ENCODE measurements at regions of chr20 and their contacts with region 1.

Region 1: GRCh38 chr20:47725248-47725973 is 59.9 kb downstream of the SULF2 start:
- DNase-seq: peak; percentile 85 to 88
- ATAC-seq: peak; percentile 81 to 92
- H3K4me3 ChIP-seq: no peak overlapping the region
- H3K27ac ChIP-seq: no peak overlapping the region
- H3K4me1 ChIP-seq: no peaks in the 10 kb centered on the region
- CTCF ChIP-seq: peak; percentile 81
- EP300 ChIP-seq: no peak
- POLR2A ChIP-seq: no peak
- RAD21 ChIP-seq: peak; percentile 81 to 90

Region 2: DNA sequence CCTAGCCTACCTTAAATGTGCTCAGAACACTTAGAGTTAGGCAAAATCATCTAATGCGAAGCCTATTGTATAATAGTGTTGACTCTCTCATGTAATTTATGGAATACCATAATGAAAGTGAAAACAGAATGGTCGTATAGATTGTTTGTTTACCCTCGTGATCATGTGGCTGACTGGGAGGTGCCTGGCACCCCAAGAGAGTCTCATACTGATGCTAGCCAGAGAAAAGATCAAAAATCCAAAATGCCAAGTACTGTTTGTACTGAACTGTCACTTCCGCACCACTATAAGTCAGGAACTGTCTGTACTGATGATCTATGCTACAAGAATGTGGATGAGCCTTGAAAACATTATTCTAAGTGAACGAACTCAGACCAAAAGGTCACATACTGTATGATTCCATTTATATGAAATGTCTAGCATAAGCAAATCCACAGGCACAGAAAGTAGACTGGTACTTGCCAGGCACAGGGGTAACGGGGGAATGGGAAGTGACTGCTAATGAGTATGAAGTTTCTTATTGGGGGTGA is 391.3 kb before region 1 on chr20:
- CTCF ChIA-PET with region 1: no interaction called
- POLR2A ChIA-PET with region 1: no interaction called
- DNase-seq: peak; percentile 77 to 91
- ATAC-seq: peak; percentile 90 to 94
- H3K4me3 ChIP-seq: peak overlapping the region; percentile 34
- H3K27ac ChIP-seq: peak overlapping the region; percentile 94 to 97
- H3K4me1 ChIP-seq: peaks cover 70% of the 10 kb centered on the region
- CTCF ChIP-seq: no peak
- EP300 ChIP-seq: peak; percentile 79 to 93; a peak in 3 of 5 replicates
- POLR2A ChIP-seq: no peak
- RAD21 ChIP-seq: peak; percentile 20 to 54; a peak in 4 of 5 replicates

Region 3: DNA sequence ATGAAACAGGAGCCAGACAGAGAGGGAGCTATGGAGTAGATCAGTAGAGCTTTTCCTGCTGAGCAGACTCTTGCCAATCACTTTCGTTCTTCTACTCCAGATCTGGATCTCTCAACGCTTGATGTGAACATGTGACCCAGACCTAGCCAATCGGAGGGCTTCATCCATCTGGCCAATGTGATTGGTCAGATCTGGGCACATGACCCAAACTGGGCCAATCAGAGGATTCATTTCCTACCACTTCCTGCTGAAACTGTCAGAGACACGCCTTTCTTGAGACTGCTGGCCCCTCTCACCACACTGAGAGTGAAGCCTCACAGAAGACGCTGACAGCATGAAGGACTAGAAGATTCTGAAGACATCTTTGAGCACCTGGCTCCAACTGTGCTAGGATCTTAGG is 324.7 kb before region 1 on chr20:
- CTCF ChIA-PET with region 1: no interaction called
- POLR2A ChIA-PET with region 1: no interaction called
- DNase-seq: peak in 1 of 2 experiments; percentile 81
- ATAC-seq: peak in 1 of 2 experiments; percentile 69; a peak in 3 of 6 replicates
- H3K4me3 ChIP-seq: no peak overlapping the region
- H3K27ac ChIP-seq: peak overlapping the region in 1 of 2 experiments; percentile 34; a peak in 1 of 6 replicates
- H3K4me1 ChIP-seq: peaks cover 8% of the 10 kb centered on the region; the same call in 2 of the 3 replicates
- CTCF ChIP-seq: no peak
- EP300 ChIP-seq: no peak
- POLR2A ChIP-seq: no peak
- RAD21 ChIP-seq: no peak

Region 4: DNA sequence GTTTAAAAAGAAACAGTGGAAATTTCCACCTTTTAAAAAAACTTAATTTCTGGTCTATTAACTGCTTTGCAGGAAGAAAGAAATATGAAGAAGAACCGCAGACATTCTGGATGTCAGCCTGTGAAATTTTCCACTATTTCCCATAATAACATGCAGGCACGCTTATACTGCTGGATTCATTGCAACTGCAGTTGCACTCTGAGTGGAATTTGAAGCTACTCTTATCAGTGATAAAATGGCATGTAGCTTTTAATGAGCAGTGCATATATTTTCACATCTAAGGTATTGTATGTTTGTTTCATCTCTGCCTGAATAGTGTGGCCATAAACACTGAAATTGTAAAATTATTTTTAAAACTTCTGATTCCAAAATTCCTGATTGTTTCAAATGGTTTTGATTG is 195.6 kb before region 1 on chr20:
- CTCF ChIA-PET with region 1: no interaction called
- POLR2A ChIA-PET with region 1: no interaction called
- DNase-seq: no peak
- ATAC-seq: no peak
- H3K4me3 ChIP-seq: no peak overlapping the region
- H3K27ac ChIP-seq: no peak overlapping the region
- H3K4me1 ChIP-seq: peaks cover 31% of the 10 kb centered on the region; the same call in 2 of the 3 replicates
- CTCF ChIP-seq: no peak
- EP300 ChIP-seq: no peak
- POLR2A ChIP-seq: no peak
- RAD21 ChIP-seq: no peak

Region 5: DNA sequence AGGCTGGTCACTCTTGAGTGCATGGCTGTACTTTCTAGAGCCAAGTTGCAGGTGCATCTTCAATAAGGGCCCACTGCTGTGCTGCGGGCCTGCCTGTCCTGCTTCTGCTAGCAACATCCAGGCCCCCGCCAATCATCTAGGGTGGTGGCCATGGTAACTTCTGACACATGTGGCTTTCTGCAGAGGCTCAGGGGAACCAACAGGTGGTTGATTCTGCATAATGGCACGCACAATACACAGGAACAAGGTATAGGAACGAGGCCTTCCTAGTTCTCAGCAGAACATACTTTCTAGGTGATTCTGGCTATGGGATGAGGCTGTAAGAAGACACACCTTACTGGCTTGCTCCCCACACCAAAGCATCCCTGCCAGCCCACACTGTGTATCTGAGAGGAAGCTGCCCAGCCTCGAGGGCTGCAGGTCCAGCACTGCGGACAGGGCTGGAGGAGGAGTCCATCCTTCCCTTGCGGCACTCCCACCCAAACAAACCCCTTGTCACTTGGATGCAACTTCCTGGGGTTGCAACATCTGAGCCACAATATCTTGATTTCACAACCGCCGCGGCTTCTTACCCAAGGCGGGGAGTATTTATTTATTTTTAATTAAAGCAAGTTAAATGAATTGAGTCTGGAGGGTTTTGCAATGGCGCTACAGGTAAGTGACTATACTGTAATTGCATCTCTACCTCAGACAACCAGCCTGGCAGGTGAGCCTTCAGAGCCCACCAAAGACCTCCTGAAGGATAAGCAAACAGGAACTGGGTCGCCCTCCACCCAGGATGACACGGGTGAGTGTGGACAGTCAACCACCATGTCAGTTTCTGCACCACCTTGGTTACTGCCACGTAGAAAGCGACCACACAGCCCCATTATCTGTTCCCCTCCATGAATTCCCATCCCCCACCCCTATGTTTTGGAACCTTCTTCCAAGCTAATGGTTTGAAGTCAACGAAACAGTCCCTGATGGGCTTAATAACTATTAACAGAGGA is 10.3 kb after region 1 on chr20:
- CTCF ChIA-PET with region 1: interaction called, 12 read pairs
- POLR2A ChIA-PET with region 1: no interaction called
- DNase-seq: no peak
- ATAC-seq: 0 out of 6 replicates have a peak, but pooled peaks of 1 of the 2 experiments have one; percentile 22
- H3K4me3 ChIP-seq: no peak overlapping the region
- H3K27ac ChIP-seq: no peak overlapping the region
- H3K4me1 ChIP-seq: no peaks in the 10 kb centered on the region; the same call in 2 of the 3 replicates
- CTCF ChIP-seq: no peak
- EP300 ChIP-seq: no peak
- POLR2A ChIP-seq: no peak
- RAD21 ChIP-seq: no peak

Region 6: DNA sequence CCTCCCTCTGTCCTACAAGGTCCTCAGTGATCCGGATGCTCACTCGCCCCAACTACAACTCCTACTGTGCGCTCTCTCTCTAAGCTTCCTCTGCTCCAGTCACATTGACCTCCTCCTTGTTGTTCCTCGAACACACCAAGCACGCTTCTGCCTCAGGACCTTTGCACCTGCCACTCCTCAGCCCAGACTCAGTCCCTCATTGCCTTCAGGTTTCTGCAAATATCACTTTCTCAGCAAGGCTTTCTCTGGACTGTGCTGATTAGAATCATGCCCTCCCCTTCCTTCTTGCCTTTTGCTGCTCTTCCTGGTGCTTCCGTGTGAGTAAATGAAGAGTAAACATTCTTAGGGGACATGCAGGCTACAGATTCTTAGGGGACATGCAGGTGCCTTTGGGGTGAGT is 18.3 kb after region 1 on chr20:
- CTCF ChIA-PET with region 1: interaction called, 14 read pairs
- POLR2A ChIA-PET with region 1: no interaction called
- DNase-seq: no peak
- ATAC-seq: no peak
- H3K4me3 ChIP-seq: no peak overlapping the region
- H3K27ac ChIP-seq: no peak overlapping the region
- H3K4me1 ChIP-seq: peaks cover 2% of the 10 kb centered on the region; the same call in 1 of the 3 replicates
- CTCF ChIP-seq: no peak
- EP300 ChIP-seq: no peak
- POLR2A ChIP-seq: no peak
- RAD21 ChIP-seq: no peak

Region 7: GRCh38 chr20:47772995-47773716 is 47.7 kb after region 1 on chr20:
- CTCF ChIA-PET with region 1: interaction called, 10 read pairs
- POLR2A ChIA-PET with region 1: no interaction called
- DNase-seq: no peak
- ATAC-seq: no peak
- H3K4me3 ChIP-seq: no peak overlapping the region
- H3K27ac ChIP-seq: no peak overlapping the region
- H3K4me1 ChIP-seq: no peaks in the 10 kb centered on the region
- CTCF ChIP-seq: no peak
- EP300 ChIP-seq: no peak
- POLR2A ChIP-seq: no peak
- RAD21 ChIP-seq: no peak

Region 8: GRCh38 chr20:47960714-47961412 is 235.5 kb after region 1 on chr20:
- CTCF ChIA-PET with region 1: no interaction called
- POLR2A ChIA-PET with region 1: no interaction called
- DNase-seq: no peak
- ATAC-seq: no peak
- H3K4me3 ChIP-seq: no peak overlapping the region
- H3K27ac ChIP-seq: no peak overlapping the region
- H3K4me1 ChIP-seq: 0 out of 3 replicates have a peak, but pooled peaks cover 4% of the 10 kb centered on the region
- CTCF ChIP-seq: no peak
- EP300 ChIP-seq: no peak
- POLR2A ChIP-seq: no peak
- RAD21 ChIP-seq: no peak

Measured in A549 (cell line).